GM12878 (cell line): ENCODE measurements at regions of chr3 and their contacts with region 1.

Region 1: GRCh38 chr3:22555753-22556435 is 647.2 kb upstream of the UBE2E2 start:
- DNase-seq: no peak
- ATAC-seq: no peak
- H3K4me3 ChIP-seq: no peak overlapping the region
- H3K27ac ChIP-seq: no peak overlapping the region
- H3K4me1 ChIP-seq: no peaks in the 10 kb centered on the region
- H3K27me3 ChIP-seq: no peaks in the 10 kb centered on the region; a peak in 1 of 4 replicates
- CTCF ChIP-seq: no peak
- EP300 ChIP-seq: no peak
- POLR2A ChIP-seq: no peak
- RAD21 ChIP-seq: no peak

Region 2: GRCh38 chr3:22089284-22089683 is 466.6 kb before region 1 on chr3:
- CTCF ChIA-PET with region 1: interaction called, 3 read pairs
- POLR2A ChIA-PET with region 1: no interaction called
- RAD21 ChIA-PET with region 1: no interaction called
- SMC1A ChIA-PET with region 1: no interaction called
- in situ Hi-C with region 1: no loop called
- intact Hi-C with region 1: loop called (anchors 5 kb)
- DNase-seq: peak; percentile 34
- ATAC-seq: peak; percentile 88
- H3K4me3 ChIP-seq: no peak overlapping the region
- H3K27ac ChIP-seq: no peak overlapping the region
- H3K4me1 ChIP-seq: no peaks in the 10 kb centered on the region
- H3K27me3 ChIP-seq: no peaks in the 10 kb centered on the region
- CTCF ChIP-seq: peak; percentile 39 to 63 (median 47); a peak in 4 of 6 replicates
- EP300 ChIP-seq: no peak
- POLR2A ChIP-seq: no peak
- RAD21 ChIP-seq: peak; percentile 61

Region 3: GRCh38 chr3:22450786-22451400 is 105.0 kb before region 1 on chr3:
- CTCF ChIA-PET with region 1: no interaction called
- POLR2A ChIA-PET with region 1: no interaction called
- RAD21 ChIA-PET with region 1: no interaction called
- SMC1A ChIA-PET with region 1: no interaction called
- in situ Hi-C with region 1: no loop called
- intact Hi-C with region 1: no loop called
- DNase-seq: no peak
- ATAC-seq: no peak
- H3K4me3 ChIP-seq: no peak overlapping the region
- H3K27ac ChIP-seq: no peak overlapping the region
- H3K4me1 ChIP-seq: no peaks in the 10 kb centered on the region
- H3K27me3 ChIP-seq: no peaks in the 10 kb centered on the region
- CTCF ChIP-seq: no peak
- EP300 ChIP-seq: no peak
- POLR2A ChIP-seq: no peak
- RAD21 ChIP-seq: no peak

Region 4: DNA sequence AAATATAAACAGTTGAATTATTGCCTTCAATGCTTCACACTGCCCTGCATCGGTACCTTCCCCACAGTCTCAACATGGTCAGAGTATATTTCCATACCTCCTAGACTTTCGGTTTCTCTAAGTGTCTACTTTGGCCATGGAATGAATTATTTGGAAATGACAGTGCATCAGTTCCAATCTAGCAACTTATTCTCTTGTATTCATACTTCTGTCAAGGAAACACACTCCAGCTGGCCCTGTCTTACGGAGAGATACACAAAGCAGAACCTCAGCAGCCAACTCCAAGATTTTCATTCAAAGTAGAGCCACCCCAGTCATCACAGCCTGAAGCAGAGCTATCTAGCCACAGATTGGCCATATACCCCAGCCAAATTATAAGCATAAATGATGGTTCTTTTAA is 128.8 kb after region 1 on chr3:
- CTCF ChIA-PET with region 1: no interaction called
- POLR2A ChIA-PET with region 1: no interaction called
- RAD21 ChIA-PET with region 1: no interaction called
- SMC1A ChIA-PET with region 1: no interaction called
- in situ Hi-C with region 1: no loop called
- intact Hi-C with region 1: loop called (anchors 5 kb)
- DNase-seq: no peak
- ATAC-seq: no peak
- H3K4me3 ChIP-seq: no peak overlapping the region
- H3K27ac ChIP-seq: no peak overlapping the region
- H3K4me1 ChIP-seq: no peaks in the 10 kb centered on the region
- H3K27me3 ChIP-seq: no peaks in the 10 kb centered on the region
- CTCF ChIP-seq: no peak
- EP300 ChIP-seq: no peak
- POLR2A ChIP-seq: no peak
- RAD21 ChIP-seq: no peak